Activated CD8-positive, alpha-beta T cell treated with anti-CD3 and anti-CD28 coated beads for 36 hours (primary cell): ENCODE measurements at regions of chr7 and their contacts with region 1.

Region 1: DNA sequence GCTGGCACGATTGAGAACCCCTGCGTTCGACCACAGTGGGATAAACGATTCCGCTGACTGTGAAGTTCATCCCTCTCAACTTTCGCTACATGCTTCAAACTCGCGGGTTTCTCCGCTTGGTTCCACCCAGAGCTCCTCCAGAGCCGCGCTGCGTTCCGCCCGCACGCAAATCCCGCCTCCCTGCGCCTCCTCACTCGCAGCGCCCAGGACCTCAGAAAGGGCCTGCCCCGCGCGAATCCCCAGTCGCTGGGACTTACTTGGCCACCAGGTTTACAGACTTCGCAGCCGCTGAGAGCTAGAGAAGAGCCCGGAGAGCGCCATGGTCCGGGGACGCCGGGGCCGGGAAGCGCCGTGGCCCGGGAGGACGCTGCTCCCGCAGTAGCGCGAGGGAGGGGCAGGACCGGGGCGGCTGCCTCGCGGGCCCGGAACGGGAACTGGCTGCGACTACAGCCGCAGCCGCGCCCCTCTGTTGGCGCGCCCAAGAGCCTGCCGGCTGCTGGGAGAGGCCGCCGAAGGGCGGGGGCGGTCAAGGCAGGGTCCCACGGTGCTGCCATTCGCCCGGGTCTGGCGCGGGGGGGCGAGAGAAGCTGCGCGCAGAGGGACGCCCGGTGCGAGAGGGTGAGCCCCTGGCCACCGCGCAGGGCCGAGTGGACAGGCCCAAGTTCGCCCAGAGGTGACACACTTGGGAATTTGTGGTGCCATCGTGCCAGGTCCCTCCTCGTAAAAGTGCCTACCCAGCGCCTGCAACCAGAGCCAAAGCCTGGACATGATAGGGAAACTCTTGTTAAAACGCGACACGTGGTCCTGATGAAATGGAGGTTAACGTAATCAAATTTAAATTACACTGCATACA is at the start of gene NOD1:
- DNase-seq: peak; percentile 73
- ATAC-seq: peak; percentile 89
- H3K4me3 Mint-ChIP-seq: peak within 1 kb of the TSS; percentile 93
- H3K27ac Mint-ChIP-seq: peak within 1 kb of the TSS; percentile 91
- H3K4me1 Mint-ChIP-seq: peaks cover 54% of the 10 kb centered on the region
- H3K27me3 Mint-ChIP-seq: no peaks in the 10 kb centered on the region
- CTCF ChIP-seq: peak; percentile 22
- total RNA-seq, gene NOD1: 11.5 to 12.5 TPM

Region 2: GRCh38 chr7:30445770-30446169 is 32.8 kb before region 1 on chr7:
- CTCF ChIA-PET with region 1: no interaction called
- POLR2A ChIA-PET with region 1: no interaction called
- intact Hi-C with region 1: no loop called
- DNase-seq: peak; percentile 89
- ATAC-seq: peak; percentile 98
- H3K4me3 Mint-ChIP-seq: no peak overlapping the region
- H3K27ac Mint-ChIP-seq: no peak overlapping the region
- H3K4me1 Mint-ChIP-seq: peaks cover 3% of the 10 kb centered on the region
- H3K27me3 Mint-ChIP-seq: no peaks in the 10 kb centered on the region
- CTCF ChIP-seq: no peak

Region 3: DNA sequence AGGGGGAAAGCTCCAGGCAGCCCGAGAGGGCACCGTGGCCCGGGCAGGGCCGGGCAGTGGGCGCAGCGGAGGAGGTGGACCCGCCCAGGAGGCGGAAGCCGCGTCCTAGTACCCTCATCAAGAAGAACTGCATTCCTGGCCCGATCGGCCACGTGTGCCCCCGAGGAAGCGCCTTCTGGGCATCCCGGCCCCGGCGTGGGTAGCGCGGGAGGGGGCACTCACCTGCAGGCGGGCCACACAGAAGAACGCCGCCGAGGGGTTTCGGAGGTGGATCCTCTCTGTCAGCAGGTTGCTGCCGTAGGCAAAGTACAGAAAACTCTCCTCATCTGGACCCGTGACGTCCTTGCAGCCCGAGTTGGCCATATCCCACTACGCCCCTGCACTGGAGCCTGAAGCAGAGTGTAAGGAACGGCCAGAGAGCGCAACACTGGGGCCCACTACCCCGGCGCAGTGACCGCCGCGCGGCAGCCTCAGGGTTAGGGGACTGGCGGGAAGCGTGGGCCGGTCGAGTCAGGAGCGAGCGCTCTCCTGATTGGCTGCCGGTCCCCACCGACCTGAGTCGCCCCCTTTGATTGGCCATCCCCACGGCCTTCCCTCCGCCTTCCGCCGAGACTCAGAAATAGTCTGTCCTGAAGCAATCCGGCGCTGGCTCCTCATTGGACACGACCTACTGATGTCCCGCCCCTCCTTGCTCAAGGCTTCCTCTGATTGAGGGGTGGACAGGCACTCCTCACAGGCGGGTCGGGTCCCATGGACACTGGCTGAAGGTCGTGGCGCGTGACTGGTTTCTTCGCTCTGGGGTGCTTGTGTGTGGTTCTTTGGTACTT is 26.0 kb after region 1 on chr7 and contains the start of gene GGCT:
- CTCF ChIA-PET with region 1: no interaction called
- POLR2A ChIA-PET with region 1: interaction called, 12 read pairs
- intact Hi-C with region 1: loop called (anchors 2 kb)
- DNase-seq: peak; percentile 99
- ATAC-seq: peak; percentile 99
- H3K4me3 Mint-ChIP-seq: peak within 1 kb of the TSS; percentile 80
- H3K27ac Mint-ChIP-seq: peak within 1 kb of the TSS; percentile 89
- H3K4me1 Mint-ChIP-seq: peaks cover 46% of the 10 kb centered on the region
- H3K27me3 Mint-ChIP-seq: no peaks in the 10 kb centered on the region
- CTCF ChIP-seq: no peak
- total RNA-seq, gene GGCT: 78.6 to 78.7 TPM